ENCODE measurements at regions of chr2 and their contacts with region 1.

Region 1: DNA sequence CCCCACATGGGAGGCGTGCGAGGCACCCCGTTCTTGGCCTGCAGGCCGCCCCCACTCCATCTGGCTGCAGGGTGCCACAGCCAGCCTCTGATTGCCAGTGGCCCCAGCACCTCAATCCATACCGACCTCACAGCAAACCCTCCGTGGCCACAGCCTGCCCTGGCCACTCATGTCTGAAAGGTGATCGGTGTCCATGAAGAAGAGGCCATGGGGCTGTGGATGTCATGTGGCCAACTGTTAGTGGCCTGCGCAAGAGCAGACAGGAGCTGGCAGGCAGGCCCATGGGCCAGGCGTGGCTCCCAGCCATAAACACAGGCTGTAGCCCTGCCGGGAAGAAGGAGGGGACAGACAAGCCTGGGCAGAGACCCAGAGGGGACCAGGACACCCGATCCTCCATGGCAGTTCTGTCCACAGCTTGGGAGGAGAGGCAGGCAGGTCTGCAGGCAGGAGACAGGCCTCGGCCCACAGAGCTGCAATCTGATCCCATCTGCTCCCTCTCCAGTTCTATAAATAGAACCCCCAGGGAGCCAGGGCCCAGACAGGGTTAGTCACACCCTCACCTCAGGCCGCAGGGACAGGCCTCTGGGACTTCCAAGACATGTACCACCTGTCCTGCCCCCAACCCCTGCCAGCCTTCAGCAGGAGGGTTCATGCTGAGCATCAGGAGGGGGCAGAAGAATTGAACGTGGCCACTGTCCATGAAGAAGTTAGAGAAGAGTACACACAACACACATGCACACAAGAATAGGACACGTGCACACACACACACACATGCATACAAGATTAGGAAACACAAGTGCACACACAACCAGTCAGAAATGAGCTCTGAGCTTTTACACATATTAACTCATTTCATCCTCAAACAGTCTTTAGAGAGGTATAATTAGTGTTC is 16.9 kb downstream of the STEAP3 start:
- DNase-seq: peak; percentile 81
- H3K4me3 ChIP-seq: no peak overlapping the region
- H3K27ac ChIP-seq: no peak overlapping the region
- H3K4me1 ChIP-seq: peaks cover 18% of the 10 kb centered on the region
- H3K27me3 ChIP-seq: no peaks in the 10 kb centered on the region
- CTCF ChIP-seq: no peak

Region 2: GRCh38 chr2:119259296-119259860 is 18.8 kb after region 1 on chr2:
- CTCF ChIA-PET with region 1: no interaction called
- dilution Hi-C with region 1: no loop called
- in situ Hi-C with region 1: no loop called
- intact Hi-C with region 1: loop called (anchors 2 kb)
- DNase-seq: no peak
- H3K4me3 ChIP-seq: no peak overlapping the region
- H3K27ac ChIP-seq: no peak overlapping the region
- H3K4me1 ChIP-seq: peaks cover 22% of the 10 kb centered on the region
- H3K27me3 ChIP-seq: no peaks in the 10 kb centered on the region
- CTCF ChIP-seq: no peak